Activated CD4-positive, alpha-beta T cell treated with anti-CD3 and anti-CD28 coated beads, Interleukin-2, amount 10 ng/mL, durations not matched to agents 24 days and 14 days (primary cell): ENCODE measurements at regions of chr12 and their contacts with region 1.

Region 1: DNA sequence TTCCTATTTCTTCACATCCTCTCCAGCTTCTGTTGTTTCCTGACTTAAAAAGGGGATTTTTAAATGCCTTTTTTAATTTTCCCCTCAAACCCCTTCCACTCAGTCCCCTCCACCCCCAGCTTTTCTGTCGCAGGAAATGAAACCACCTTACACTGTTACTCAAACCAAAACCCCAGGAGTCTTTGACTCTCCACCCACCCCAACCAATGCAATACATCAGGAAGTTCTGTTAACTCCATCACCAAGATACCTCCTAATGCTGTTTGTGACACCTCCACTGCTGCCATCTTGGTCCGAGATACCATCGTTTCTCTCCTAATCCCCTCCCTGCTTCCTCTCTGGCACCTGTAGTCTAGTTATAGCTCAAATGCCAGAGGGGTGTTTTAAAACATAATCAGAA is 25.4 kb upstream of the CPM start:
- DNase-seq: peak; percentile 77
- H3K4me3 Mint-ChIP-seq: peak overlapping the region; percentile 56
- H3K27ac Mint-ChIP-seq: peak overlapping the region; percentile 93
- H3K4me1 Mint-ChIP-seq: peaks cover 50% of the 10 kb centered on the region
- H3K27me3 Mint-ChIP-seq: no peaks in the 10 kb centered on the region

Region 2: DNA sequence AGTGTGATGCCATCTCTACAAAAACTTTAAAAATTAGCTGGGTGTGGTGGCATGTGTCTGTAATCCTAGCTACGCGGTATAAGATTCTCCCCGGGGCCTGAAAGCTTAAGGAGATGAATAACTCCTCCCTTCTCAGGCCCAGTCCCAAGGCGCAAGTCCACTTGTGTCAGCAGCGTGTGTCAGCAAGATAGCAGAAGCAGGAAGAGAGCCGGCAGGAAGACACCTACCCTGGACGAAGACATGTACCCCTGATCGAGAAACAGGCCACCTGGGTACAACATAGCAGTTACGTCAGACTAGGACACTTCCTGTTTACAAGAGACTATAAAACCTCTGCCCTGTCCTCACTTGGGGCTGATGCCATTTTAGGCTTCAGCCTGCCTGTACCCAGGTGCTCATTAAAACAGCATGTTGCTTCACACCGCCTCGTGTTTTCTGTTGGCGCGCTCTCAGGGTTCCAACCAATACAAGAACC is 68.6 kb before region 1 on chr12:
- intact Hi-C with region 1: loop called (anchors 2 kb)
- DNase-seq: no peak
- H3K4me3 Mint-ChIP-seq: no peak overlapping the region
- H3K27ac Mint-ChIP-seq: peak overlapping the region; percentile 12
- H3K4me1 Mint-ChIP-seq: peaks cover 39% of the 10 kb centered on the region
- H3K27me3 Mint-ChIP-seq: no peaks in the 10 kb centered on the region

Region 3: DNA sequence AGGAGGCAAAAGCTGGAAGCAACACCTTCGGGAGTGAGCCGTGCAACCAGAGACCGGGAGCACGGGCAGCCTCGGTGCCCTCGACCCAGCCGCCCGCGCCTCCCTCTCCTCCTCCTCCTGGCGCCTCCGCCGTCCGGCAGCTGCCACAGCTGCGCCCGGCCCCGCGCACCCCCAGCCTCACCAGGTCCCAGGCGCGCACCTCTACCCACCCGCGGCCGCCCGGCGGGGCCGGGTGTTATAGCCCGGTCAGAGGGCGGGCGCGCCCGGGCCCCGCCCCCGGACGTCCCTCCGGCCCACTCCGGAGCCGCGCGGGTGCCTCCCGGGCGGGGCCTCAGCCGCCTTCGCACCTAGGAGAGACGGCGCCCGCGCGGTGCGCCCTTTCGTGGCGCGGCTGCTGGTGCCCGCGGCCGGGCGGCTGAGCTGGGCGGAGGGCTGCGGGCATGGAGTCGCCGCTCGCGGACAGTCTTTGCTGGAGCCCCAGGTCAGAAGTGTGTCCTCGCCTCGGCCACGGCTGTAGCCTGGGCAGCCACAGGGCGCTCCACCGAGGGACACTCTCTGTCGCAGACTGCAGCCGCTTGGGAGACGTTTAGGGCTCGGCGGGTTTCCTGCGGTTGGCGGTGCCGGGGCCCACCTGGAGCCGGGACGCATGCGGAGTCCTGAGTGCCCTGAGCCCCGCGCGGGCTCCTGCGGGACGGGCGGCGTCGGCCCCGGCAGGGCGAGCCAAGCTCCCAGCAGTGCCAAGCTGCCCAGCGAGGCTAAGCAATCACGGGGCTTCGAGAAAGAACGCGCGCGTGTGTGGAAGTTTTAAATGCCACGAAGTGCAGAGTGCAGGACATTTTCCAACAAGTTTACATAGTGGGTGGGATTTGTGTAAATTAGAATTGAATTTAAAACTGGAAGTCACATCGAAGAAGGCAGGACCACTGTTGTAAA is 25.1 kb before region 1 on chr12 and contains the start of gene CPM:
- intact Hi-C with region 1: loop called (anchors 1 kb)
- DNase-seq: peak; percentile 96
- H3K4me3 Mint-ChIP-seq: peak within 1 kb of the TSS; percentile 94
- H3K27ac Mint-ChIP-seq: peak within 1 kb of the TSS; percentile 85
- H3K4me1 Mint-ChIP-seq: peaks cover 19% of the 10 kb centered on the region
- H3K27me3 Mint-ChIP-seq: peaks cover 2% of the 10 kb centered on the region
- total RNA-seq, gene CPM: 63.5 and 76.5 TPM in 2 replicates

Region 4: GRCh38 chr12:69059483-69060457 is 101.4 kb after region 1 on chr12:
- intact Hi-C with region 1: loop called (anchors 1 kb)
- DNase-seq: no peak
- H3K4me3 Mint-ChIP-seq: peak overlapping the region; percentile 27
- H3K27ac Mint-ChIP-seq: peak overlapping the region; percentile 73
- H3K4me1 Mint-ChIP-seq: peaks cover 29% of the 10 kb centered on the region
- H3K27me3 Mint-ChIP-seq: no peaks in the 10 kb centered on the region

Region 5: GRCh38 chr12:69157023-69157655 is 198.8 kb after region 1 on chr12:
- intact Hi-C with region 1: loop called (anchors 5 kb)
- DNase-seq: peak; percentile 98
- H3K4me3 Mint-ChIP-seq: peak overlapping the region; percentile 48
- H3K27ac Mint-ChIP-seq: peak overlapping the region; percentile 72
- H3K4me1 Mint-ChIP-seq: peaks cover 37% of the 10 kb centered on the region
- H3K27me3 Mint-ChIP-seq: no peaks in the 10 kb centered on the region